T-cell (primary cell): ENCODE measurements at regions of chr2 and their contacts with region 1.

Region 1: GRCh38 chr2:234425619-234426603 is 71.0 kb downstream of the ARL4C start:
- DNase-seq: peak; percentile 66 to 93 (median 84)
- ATAC-seq: peak; percentile 79 to 88 (median 86)
- H3K4me3 ChIP-seq: peak overlapping the region; percentile 8 to 48
- H3K4me3 Mint-ChIP-seq: peak overlapping the region; percentile 37 to 81 (median 50)
- H3K27ac ChIP-seq: peak overlapping the region; percentile 94
- H3K27ac Mint-ChIP-seq: peak overlapping the region; percentile 97 to 98
- H3K4me1 ChIP-seq: peaks cover 71 to 89% of the 10 kb centered on the region in 2 experiments
- H3K4me1 Mint-ChIP-seq: peaks cover 93 to 98% (median 96%) of the 10 kb centered on the region in 3 donors
- H3K27me3 ChIP-seq: no peaks in the 10 kb centered on the region
- H3K27me3 Mint-ChIP-seq: no peaks in the 10 kb centered on the region

Region 2: GRCh38 chr2:234169674-234170073 is 256.2 kb before region 1 on chr2:
- CTCF ChIA-PET with region 1: no interaction called
- POLR2A ChIA-PET with region 1: interaction called in 1 of 2 experiments, 15 read pairs
- DNase-seq: no peak
- ATAC-seq: no peak
- H3K4me3 ChIP-seq: no peak overlapping the region
- H3K4me3 Mint-ChIP-seq: no peak overlapping the region
- H3K27ac ChIP-seq: no peak overlapping the region
- H3K27ac Mint-ChIP-seq: no peak overlapping the region
- H3K4me1 ChIP-seq: peaks cover 3 to 5% of the 10 kb centered on the region in 2 experiments
- H3K4me1 Mint-ChIP-seq: peaks cover 8 to 14% (median 12%) of the 10 kb centered on the region in 3 donors
- H3K27me3 ChIP-seq: no peaks in the 10 kb centered on the region
- H3K27me3 Mint-ChIP-seq: no peaks in the 10 kb centered on the region

Region 3: DNA sequence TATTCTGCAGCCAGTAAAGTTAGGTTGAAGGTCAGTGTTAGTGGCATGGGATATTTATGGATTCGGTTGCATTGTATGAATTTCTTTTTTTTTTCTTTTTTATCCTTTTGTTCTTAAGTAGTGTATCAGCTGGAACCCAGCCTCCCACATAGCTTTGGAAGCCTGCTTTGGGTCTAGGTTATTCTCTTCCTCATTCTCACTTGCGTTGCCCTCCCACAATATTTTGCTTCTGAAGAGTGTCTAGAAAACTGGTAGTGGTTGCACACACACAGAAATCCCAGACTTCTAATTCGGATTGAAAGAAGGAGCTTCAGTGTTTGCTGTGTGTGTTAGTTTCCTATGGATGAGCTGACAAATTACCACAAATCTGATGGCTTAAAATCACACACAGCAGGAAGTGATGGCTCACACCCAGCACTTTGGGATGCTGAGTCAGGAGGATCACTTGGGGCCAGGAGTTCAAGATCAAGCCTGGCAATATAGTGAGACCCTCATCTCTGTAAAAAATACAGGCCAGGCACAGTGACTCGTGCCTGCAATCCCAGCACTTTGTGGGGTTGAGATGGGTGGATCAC is 33.8 kb before region 1 on chr2:
- CTCF ChIA-PET with region 1: no interaction called
- POLR2A ChIA-PET with region 1: interaction called in 1 of 2 experiments, 10 read pairs
- DNase-seq: no peak
- ATAC-seq: no peak
- H3K4me3 ChIP-seq: no peak overlapping the region
- H3K4me3 Mint-ChIP-seq: peak overlapping the region in 2 of 3 donors; percentile 32 to 53
- H3K27ac ChIP-seq: no peak overlapping the region
- H3K27ac Mint-ChIP-seq: peak overlapping the region; percentile 70 to 87
- H3K4me1 ChIP-seq: peaks cover 31 to 38% of the 10 kb centered on the region in 2 experiments
- H3K4me1 Mint-ChIP-seq: peaks cover 62 to 74% (median 68%) of the 10 kb centered on the region in 3 donors
- H3K27me3 ChIP-seq: no peaks in the 10 kb centered on the region
- H3K27me3 Mint-ChIP-seq: no peaks in the 10 kb centered on the region

Region 4: DNA sequence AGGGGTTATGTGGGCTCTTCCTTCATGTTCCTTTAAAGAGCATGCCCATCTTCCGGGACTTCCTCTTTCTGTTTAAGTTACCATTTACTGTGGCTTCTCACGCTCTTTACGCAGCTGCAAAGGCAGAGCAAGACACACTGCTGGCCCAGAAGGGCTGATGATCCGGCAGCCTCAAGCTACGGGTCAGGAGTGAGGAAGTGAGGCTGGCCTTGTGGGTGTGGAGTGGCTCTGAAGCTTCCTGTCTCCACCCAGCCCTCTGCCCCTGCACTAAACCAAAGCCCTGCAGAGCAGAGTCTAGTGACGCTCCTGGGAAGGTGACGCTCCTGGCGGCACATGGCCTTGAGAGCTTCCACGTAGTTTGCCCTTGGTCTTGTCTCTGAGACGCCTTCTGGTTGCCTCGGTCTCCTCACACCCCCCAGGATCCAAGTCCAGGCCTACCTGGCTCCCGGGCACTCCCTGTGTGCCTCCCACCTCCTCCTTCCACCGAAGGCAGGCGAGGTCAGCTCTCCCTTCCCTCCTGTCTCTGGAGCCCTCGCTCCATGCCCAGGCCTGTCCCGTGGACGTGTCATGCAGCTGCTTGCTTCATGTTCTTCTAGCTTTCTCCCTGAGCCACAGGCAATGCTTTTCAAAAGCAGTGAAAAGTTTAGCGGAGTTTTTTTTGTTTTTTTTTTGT is 20.6 kb after region 1 on chr2:
- CTCF ChIA-PET with region 1: interaction called, 12 to 28 read pairs
- POLR2A ChIA-PET with region 1: interaction called, 8 to 74 read pairs
- DNase-seq: peak; percentile 62 to 91 (median 80)
- ATAC-seq: peak; percentile 85 to 90 (median 88)
- H3K4me3 ChIP-seq: no peak overlapping the region
- H3K4me3 Mint-ChIP-seq: peak overlapping the region; percentile 49 to 74 (median 60)
- H3K27ac ChIP-seq: peak overlapping the region; percentile 98
- H3K27ac Mint-ChIP-seq: peak overlapping the region; percentile 98 to 99
- H3K4me1 ChIP-seq: peaks cover 72 to 78% of the 10 kb centered on the region in 2 experiments
- H3K4me1 Mint-ChIP-seq: peaks cover 89 to 98% (median 93%) of the 10 kb centered on the region in 3 donors
- H3K27me3 ChIP-seq: no peaks in the 10 kb centered on the region
- H3K27me3 Mint-ChIP-seq: no peaks in the 10 kb centered on the region

Region 5: DNA sequence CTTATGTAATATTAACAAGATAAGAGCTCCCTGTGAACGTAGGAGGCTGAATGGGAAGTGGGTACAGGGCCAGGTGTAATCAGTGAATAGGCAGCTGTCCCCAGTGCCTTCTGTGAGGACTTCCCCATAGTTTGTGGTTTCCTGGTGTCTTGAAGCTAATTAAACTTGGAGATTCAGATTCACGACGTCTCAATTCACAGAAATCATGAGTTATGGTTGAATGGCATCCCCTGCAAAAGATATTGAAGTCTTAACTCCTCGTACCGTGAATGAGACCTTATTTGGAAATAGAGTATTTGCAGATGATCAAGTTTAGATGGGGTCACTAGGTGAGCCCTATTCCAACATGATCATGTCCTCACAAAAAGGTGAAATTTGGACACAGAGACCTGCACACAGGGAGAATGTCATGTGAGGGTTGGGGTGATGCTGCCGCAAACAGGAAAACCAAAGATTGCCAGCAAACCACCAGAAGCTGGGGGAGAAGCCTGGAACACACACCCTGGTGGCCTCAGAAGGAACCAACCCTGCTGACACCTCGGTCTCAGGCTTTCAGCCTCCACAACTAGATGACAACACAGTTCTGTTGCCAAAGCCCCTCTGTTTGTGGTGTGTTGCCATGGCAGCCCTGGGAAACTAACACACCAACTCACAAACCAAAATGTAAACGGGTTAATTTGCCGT is 57.8 kb after region 1 on chr2:
- CTCF ChIA-PET with region 1: interaction called, 7 to 15 read pairs
- POLR2A ChIA-PET with region 1: interaction called, 7 to 29 read pairs
- DNase-seq: peak; percentile 47 to 94 (median 87)
- ATAC-seq: peak; percentile 73 to 78 (median 77)
- H3K4me3 ChIP-seq: peak overlapping the region; percentile 11 to 26
- H3K4me3 Mint-ChIP-seq: peak overlapping the region; percentile 26 to 73 (median 51)
- H3K27ac ChIP-seq: peak overlapping the region; percentile 91
- H3K27ac Mint-ChIP-seq: peak overlapping the region; percentile 93 to 98
- H3K4me1 ChIP-seq: peaks cover 31 to 73% of the 10 kb centered on the region in 2 experiments
- H3K4me1 Mint-ChIP-seq: peaks cover 75 to 92% (median 90%) of the 10 kb centered on the region in 3 donors
- H3K27me3 ChIP-seq: no peaks in the 10 kb centered on the region
- H3K27me3 Mint-ChIP-seq: no peaks in the 10 kb centered on the region

Region 6: DNA sequence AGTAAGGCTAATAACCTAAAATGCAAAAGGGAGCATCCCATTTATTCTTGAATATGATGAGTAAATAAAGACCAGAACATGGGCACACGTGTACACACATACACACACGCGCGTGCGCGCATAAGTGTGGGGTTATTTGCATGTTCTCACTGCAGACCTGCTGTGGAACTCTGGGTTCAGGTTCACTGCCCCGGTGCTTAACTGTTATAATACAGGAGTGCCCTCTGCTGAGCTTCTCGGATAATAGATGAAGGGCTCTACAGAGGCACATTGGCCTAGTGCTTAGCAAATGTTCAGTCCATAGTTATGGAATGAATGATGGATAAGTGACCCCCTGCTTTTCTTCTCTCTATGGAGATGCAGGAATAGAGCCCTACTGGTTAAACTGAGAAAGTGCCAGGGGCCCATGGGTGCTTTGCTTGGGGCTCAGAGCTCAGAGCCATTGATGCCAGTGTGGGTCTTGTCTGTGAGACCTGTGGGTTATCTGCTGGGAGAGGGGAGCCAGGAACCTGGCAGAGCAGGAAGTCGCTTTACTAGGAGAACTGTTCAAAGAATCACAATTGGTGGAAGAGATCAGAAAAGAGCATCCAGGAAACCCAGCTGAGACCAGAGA is 74.6 kb after region 1 on chr2:
- CTCF ChIA-PET with region 1: interaction called in 1 of 2 experiments, 6 read pairs
- POLR2A ChIA-PET with region 1: interaction called, 13 to 23 read pairs
- DNase-seq: peak; percentile 53 to 87 (median 71)
- ATAC-seq: peak; percentile 33 to 51 (median 40)
- H3K4me3 ChIP-seq: no peak overlapping the region
- H3K4me3 Mint-ChIP-seq: peak overlapping the region; percentile 38 to 62 (median 49)
- H3K27ac ChIP-seq: peak overlapping the region; percentile 54
- H3K27ac Mint-ChIP-seq: peak overlapping the region; percentile 87 to 97
- H3K4me1 ChIP-seq: peaks cover 21 to 29% of the 10 kb centered on the region in 2 experiments
- H3K4me1 Mint-ChIP-seq: peaks cover 30 to 33% (median 33%) of the 10 kb centered on the region in 3 donors
- H3K27me3 ChIP-seq: peaks cover 0 to 3% of the 10 kb centered on the region in 2 experiments
- H3K27me3 Mint-ChIP-seq: peaks cover 0 to 4% of the 10 kb centered on the region in 2 donors